ENCODE measurements at regions of chr17 and their contacts with region 1.

Region 1: DNA sequence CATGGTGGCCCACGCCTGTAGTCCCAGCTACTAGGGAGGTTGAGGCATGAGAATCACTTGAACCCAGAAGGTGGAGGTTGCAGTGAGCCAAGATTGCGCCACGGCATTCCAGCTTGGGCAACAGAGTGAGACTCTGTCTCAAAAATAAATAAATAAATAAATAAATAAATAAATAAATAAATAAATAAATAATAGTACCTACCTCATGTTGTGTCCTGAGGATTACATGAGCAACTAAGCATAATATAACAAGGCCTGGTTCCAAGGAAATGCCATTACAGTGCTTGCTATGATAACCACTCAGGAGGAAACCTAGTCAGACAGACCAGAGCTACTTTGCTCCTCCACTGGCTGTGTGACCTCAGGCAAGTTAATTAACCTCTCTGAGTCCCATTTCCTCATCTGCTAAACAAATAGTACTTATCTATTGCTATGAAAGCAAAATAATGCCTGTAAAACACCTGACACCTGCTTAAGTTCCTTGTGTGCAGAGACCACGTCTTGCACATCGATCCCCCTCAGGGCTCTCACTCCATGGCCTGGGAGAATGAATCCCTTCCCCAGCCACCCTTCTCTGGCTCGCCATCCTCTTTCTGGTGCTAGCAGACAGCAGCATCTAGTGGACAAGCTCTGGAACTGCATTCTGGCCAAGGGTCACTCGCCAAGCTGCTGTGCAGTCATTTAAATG is 7.5 kb downstream of the EPOP start:
- DNase-seq: peak; percentile 44 to 60
- ATAC-seq: peak; percentile 25 to 76 (median 69)
- H3K4me3 ChIP-seq: no peak overlapping the region
- H3K27ac ChIP-seq: no peak overlapping the region
- H3K4me1 ChIP-seq: no peaks in the 10 kb centered on the region
- H3K27me3 ChIP-seq: peaks cover 0 to 67% (median 32%) of the 10 kb centered on the region in 7 donors
- CTCF ChIP-seq: peak; percentile 92 to 100 (median 98)

Region 2: DNA sequence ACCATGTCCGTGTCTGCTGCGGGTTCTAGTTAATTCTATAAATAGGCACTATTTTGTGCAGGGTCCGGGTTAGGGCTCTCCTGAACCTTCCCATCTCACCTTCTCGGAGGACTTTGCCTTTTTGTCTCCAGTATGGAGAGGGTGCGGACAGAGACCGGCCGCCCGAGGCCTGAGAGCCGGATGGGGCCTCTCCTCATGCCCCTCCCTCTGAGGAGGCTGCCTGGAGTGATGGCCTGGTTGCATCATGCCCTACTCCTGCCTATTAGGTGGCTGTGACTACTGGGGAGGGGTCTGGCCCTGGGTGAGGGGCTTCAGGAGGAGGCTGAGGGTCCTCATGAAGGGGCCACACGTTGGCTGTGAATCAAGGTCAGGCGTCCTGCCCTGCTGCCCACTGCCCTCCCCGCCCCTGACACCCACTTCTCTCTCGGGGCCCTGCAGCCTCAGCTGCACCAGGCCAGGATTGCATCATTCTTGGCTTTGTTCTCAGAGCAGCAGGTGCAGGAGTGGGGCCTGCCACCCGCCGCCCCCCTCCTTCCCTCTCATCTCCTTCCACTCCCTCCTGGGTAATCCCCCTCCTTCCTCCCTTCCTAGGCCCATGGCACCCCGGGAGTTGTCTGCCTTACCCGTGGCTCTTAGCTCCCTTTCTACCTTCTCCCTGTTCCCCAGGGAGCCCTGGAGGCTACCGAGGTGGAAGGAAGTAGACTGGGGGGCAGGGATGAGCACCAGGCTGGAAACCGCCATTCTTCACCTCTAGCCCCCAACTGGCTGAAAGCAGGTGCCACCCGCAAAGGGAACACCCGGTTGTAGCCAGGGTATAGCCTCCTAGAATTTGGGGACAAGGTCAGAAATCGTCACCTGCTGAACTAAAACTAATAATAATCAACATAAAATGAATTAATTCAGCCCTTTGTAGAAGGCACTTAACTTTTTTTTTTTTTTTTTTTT is 251.7 kb before region 1 on chr17:
- intact Hi-C with region 1: loop called in 7 of 10 experiments (anchors 5 to 10 kb)
- DNase-seq: no peak
- ATAC-seq: peak in 6 of 8 donors; percentile 19 to 50 (median 48)
- H3K4me3 ChIP-seq: peak overlapping the region in 5 of 10 donors; percentile 0 to 15 (median 10)
- H3K27ac ChIP-seq: no peak overlapping the region
- H3K4me1 ChIP-seq: peaks cover 4 to 30% (median 15%) of the 10 kb centered on the region in 9 donors
- H3K27me3 ChIP-seq: peaks cover 0 to 46% (median 23%) of the 10 kb centered on the region in 7 donors
- CTCF ChIP-seq: no peak

Region 3: DNA sequence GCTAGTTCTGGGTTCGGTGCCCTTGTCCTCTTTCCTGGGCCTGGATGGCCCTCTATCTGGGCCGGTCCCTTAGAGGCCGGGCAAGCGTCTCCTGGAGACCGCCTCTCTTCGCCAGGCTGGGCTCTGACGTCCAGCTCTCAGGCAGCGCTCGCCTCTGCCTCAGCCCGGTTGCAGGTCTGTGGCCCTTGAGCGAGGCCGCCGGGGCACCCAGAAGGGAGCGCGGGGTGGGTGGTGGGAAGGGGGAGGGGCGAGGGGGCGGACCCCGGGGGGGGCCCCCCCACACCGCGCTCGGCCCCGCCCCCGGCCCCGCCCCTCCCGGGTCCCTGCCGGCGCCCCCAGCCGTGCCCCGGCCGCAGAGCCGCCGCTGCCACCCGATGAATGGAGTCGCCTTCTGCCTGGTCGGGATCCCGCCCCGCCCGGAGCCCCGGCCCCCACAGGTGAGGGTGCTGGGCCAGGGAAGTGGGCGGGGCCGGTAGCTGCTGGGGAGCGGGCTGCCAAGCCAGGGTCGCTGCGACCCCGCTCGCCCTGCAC is 239.1 kb before region 1 on chr17 and contains the start of gene ARHGAP23:
- intact Hi-C with region 1: loop called in 6 of 10 experiments (anchors 5 to 10 kb)
- DNase-seq: peak; percentile 77 to 80
- ATAC-seq: peak; percentile 53 to 76 (median 67)
- H3K4me3 ChIP-seq: peak within 1 kb of the TSS; percentile 80 to 99 (median 95)
- H3K27ac ChIP-seq: peak within 1 kb of the TSS; percentile 91 to 100 (median 96)
- H3K4me1 ChIP-seq: peaks cover 19 to 87% (median 67%) of the 10 kb centered on the region in 9 donors
- H3K27me3 ChIP-seq: peaks cover 0 to under 1% (median 0%) of the 10 kb centered on the region in 7 donors
- CTCF ChIP-seq: no peak
- total RNA-seq, gene ARHGAP23: 48.3 to 78.4 (median 68.0) TPM

Region 4: DNA sequence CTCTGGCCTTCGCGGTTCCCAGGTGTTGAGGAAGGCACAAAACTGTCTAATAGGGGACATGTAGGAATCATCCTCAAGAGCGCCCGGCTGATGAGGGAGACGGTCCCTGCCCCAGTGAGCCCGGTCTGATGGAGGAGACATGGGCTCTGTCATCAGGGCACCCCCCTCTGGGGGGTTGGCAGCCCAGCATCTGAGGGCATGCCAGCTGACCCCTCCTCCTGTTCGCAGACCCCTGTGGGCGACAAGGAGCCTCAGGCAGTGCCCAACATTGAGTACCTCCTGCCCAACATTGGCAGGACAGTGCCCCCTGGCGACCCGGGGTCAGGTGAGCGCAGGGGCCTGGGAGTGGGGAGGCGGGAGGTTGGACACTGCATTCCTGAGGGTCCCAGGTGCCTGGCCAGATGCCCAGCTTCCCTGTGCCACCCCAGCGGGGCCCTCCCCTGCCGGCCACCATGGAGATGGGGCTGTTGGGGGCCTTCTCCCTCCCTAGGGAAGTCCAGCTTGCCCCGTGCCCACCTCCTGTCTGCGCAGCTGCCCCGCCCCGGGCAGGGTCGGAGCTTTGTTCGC is 169.0 kb before region 1 on chr17:
- intact Hi-C with region 1: loop called in 8 of 10 experiments (anchors 2 to 5 kb)
- DNase-seq: no peak
- ATAC-seq: no peak
- H3K4me3 ChIP-seq: no peak overlapping the region
- H3K27ac ChIP-seq: no peak overlapping the region
- H3K4me1 ChIP-seq: no peaks in the 10 kb centered on the region
- H3K27me3 ChIP-seq: no peaks in the 10 kb centered on the region
- CTCF ChIP-seq: no peak

Region 5: GRCh38 chr17:38557836-38558727 is 109.2 kb before region 1 on chr17:
- intact Hi-C with region 1: loop called (anchors 2 to 10 kb)
- DNase-seq: peak; percentile 89 to 93
- ATAC-seq: peak; percentile 87 to 96 (median 94)
- H3K4me3 ChIP-seq: peak overlapping the region; percentile 0 to 57 (median 42)
- H3K27ac ChIP-seq: no peak overlapping the region
- H3K4me1 ChIP-seq: peaks cover 20 to 39% (median 33%) of the 10 kb centered on the region in 9 donors
- H3K27me3 ChIP-seq: peaks cover 30 to 64% (median 47%) of the 10 kb centered on the region in 7 donors
- CTCF ChIP-seq: peak; percentile 84 to 98 (median 90)

Region 6: GRCh38 chr17:38958756-38959155 is 291.5 kb after region 1 on chr17:
- intact Hi-C with region 1: no loop called
- DNase-seq: no peak
- ATAC-seq: no peak
- H3K4me3 ChIP-seq: no peak overlapping the region
- H3K27ac ChIP-seq: no peak overlapping the region
- H3K4me1 ChIP-seq: no peaks in the 10 kb centered on the region
- H3K27me3 ChIP-seq: no peaks in the 10 kb centered on the region
- CTCF ChIP-seq: no peak